CD4-positive, alpha-beta memory T cell (primary cell): ENCODE measurements at regions of chr17 and their contacts with region 1.

Region 1: GRCh38 chr17:40531051-40531991 is 29.9 kb upstream of the TNS4 start:
- DNase-seq: peak; percentile 53 to 85 (median 58)
- H3K4me3 ChIP-seq: no peak overlapping the region
- H3K4me3 Mint-ChIP-seq: peak overlapping the region in 7 of 8 donors; percentile 27 to 75 (median 37)
- H3K27ac ChIP-seq: no peak overlapping the region
- H3K27ac Mint-ChIP-seq: peak overlapping the region; percentile 78 to 100 (median 84)
- H3K4me1 ChIP-seq: peaks cover 77% of the 10 kb centered on the region
- H3K4me1 Mint-ChIP-seq: peaks cover 57 to 82% (median 65%) of the 10 kb centered on the region in 4 donors
- H3K27me3 ChIP-seq: no peaks in the 10 kb centered on the region
- H3K27me3 Mint-ChIP-seq: peaks cover 0 to 2% of the 10 kb centered on the region in 2 donors

Region 2: GRCh38 chr17:40303009-40303657 is 228.2 kb before region 1 on chr17:
- CTCF ChIA-PET with region 1: interaction called, 27 read pairs
- POLR2A ChIA-PET with region 1: interaction called, 6 read pairs
- intact Hi-C with region 1: loop called (anchors 5 kb)
- DNase-seq: peak; percentile 62 to 70 (median 66)
- H3K4me3 ChIP-seq: no peak overlapping the region
- H3K4me3 Mint-ChIP-seq: no peak overlapping the region
- H3K27ac ChIP-seq: no peak overlapping the region
- H3K27ac Mint-ChIP-seq: peak overlapping the region in 5 of 7 donors; percentile 2 to 53 (median 13)
- H3K4me1 ChIP-seq: peaks cover 37% of the 10 kb centered on the region
- H3K4me1 Mint-ChIP-seq: peaks cover 14 to 17% (median 15%) of the 10 kb centered on the region in 4 donors
- H3K27me3 ChIP-seq: no peaks in the 10 kb centered on the region
- H3K27me3 Mint-ChIP-seq: no peaks in the 10 kb centered on the region

Region 3: GRCh38 chr17:40399185-40399584 is 132.1 kb before region 1 on chr17:
- CTCF ChIA-PET with region 1: interaction called, 93 read pairs
- POLR2A ChIA-PET with region 1: interaction called, 24 read pairs
- intact Hi-C with region 1: loop called (anchors 1 kb)
- DNase-seq: peak in 4 of 5 donors; percentile 40 to 66 (median 57)
- H3K4me3 ChIP-seq: no peak overlapping the region
- H3K4me3 Mint-ChIP-seq: no peak overlapping the region
- H3K27ac ChIP-seq: no peak overlapping the region
- H3K27ac Mint-ChIP-seq: peak overlapping the region in 2 of 7 donors; percentile 82 to 84
- H3K4me1 ChIP-seq: peaks cover 21% of the 10 kb centered on the region
- H3K4me1 Mint-ChIP-seq: peaks cover 16 to 24% (median 21%) of the 10 kb centered on the region in 4 donors
- H3K27me3 ChIP-seq: no peaks in the 10 kb centered on the region
- H3K27me3 Mint-ChIP-seq: no peaks in the 10 kb centered on the region

Region 4: DNA sequence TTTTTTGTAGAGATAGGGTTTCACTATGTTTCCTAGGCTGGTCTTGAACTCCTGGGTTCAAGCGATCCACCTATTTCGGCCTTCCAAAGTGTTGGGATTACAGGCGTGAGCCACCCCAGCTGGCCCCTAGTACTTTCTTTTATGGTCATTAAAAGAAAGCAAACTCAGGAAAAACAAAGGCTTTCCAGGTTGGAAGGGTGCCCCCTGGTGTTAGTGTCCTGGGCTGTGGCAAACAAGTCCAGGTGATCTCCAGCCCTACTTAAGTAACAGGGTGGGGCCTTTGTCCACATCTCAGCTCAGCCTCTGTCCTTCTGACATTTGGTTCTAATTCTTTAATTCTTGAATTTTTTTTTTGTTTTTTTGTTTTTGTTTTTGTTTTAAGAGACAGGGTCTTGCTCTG is 81.1 kb before region 1 on chr17:
- CTCF ChIA-PET with region 1: interaction called, 192 read pairs
- POLR2A ChIA-PET with region 1: interaction called, 12 read pairs
- intact Hi-C with region 1: no loop called
- DNase-seq: peak in 2 of 5 donors; percentile 18 to 26
- H3K4me3 ChIP-seq: no peak overlapping the region
- H3K4me3 Mint-ChIP-seq: no peak overlapping the region
- H3K27ac ChIP-seq: no peak overlapping the region
- H3K27ac Mint-ChIP-seq: no peak overlapping the region
- H3K4me1 ChIP-seq: peaks cover 35% of the 10 kb centered on the region
- H3K4me1 Mint-ChIP-seq: peaks cover 12 to 30% (median 21%) of the 10 kb centered on the region in 4 donors
- H3K27me3 ChIP-seq: no peaks in the 10 kb centered on the region
- H3K27me3 Mint-ChIP-seq: no peaks in the 10 kb centered on the region

Region 5: DNA sequence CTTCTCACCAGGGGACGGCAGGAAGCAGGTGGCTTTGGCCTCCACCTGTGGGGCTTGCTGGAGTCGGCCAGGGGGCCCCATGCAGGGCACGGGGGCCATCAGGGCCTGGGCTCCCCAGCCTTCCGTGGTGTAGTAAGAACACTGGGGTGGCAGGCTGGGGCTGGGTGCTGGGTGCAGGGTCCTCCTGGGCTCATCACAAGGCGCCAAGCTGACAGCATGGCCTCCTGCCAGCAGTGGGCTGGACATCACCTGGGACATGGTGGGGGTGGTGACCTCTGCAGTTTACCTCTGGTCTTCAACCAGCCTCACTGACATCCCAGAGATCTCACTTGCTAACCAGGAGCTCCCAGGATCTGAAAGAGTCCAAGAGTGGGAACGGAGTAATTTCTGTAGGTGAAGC is 35.2 kb before region 1 on chr17:
- CTCF ChIA-PET with region 1: interaction called, 14 read pairs
- POLR2A ChIA-PET with region 1: interaction called, 29 read pairs
- intact Hi-C with region 1: no loop called
- DNase-seq: no peak
- H3K4me3 ChIP-seq: no peak overlapping the region
- H3K4me3 Mint-ChIP-seq: no peak overlapping the region
- H3K27ac ChIP-seq: no peak overlapping the region
- H3K27ac Mint-ChIP-seq: no peak overlapping the region
- H3K4me1 ChIP-seq: peaks cover 10% of the 10 kb centered on the region
- H3K4me1 Mint-ChIP-seq: peaks cover under 1 to 8% (median 6%) of the 10 kb centered on the region in 4 donors
- H3K27me3 ChIP-seq: no peaks in the 10 kb centered on the region
- H3K27me3 Mint-ChIP-seq: no peaks in the 10 kb centered on the region

Region 6: DNA sequence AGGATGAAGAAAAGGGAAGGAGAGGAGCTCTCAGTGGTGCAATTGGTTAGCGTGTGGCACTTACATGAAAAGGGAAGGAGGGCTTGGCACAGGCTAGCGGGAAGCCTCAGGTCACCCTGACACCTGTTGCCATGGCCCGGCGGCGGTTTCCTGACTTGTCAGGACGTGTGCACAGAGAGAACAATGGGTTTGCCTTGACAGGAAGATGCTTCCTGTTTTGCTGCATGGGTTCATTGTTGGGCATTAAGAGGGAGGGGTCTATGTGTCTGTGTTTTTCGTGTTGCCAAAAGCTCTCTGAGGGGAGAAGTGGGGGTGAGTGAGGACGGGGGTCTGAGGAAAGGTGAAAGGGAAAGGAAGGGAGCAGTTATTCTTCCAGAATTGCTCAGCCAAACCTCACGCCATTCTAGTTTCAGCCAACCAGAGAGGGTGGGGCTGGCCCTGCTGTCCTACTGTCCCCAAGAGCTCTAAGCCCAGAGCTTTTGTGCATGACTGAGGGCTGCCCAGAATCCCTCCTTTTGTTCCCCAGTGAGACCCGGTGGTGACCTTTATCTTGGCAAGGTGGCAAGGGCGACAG is 51.1 kb after region 1 on chr17:
- CTCF ChIA-PET with region 1: interaction called, 3 read pairs
- POLR2A ChIA-PET with region 1: interaction called, 10 read pairs
- intact Hi-C with region 1: no loop called
- DNase-seq: peak; percentile 74 to 78 (median 76)
- H3K4me3 ChIP-seq: peak overlapping the region; percentile 28 to 34
- H3K4me3 Mint-ChIP-seq: peak overlapping the region; percentile 32 to 84 (median 80)
- H3K27ac ChIP-seq: peak overlapping the region; percentile 47
- H3K27ac Mint-ChIP-seq: peak overlapping the region; percentile 75 to 96 (median 95)
- H3K4me1 ChIP-seq: peaks cover 72% of the 10 kb centered on the region
- H3K4me1 Mint-ChIP-seq: peaks cover 57 to 95% (median 78%) of the 10 kb centered on the region in 4 donors
- H3K27me3 ChIP-seq: no peaks in the 10 kb centered on the region
- H3K27me3 Mint-ChIP-seq: no peaks in the 10 kb centered on the region

Region 7: GRCh38 chr17:41026715-41027471 is 495.6 kb after region 1 on chr17 and contains the start of gene KRTAP1-5:
- CTCF ChIA-PET with region 1: no interaction called
- POLR2A ChIA-PET with region 1: no interaction called
- intact Hi-C with region 1: no loop called
- DNase-seq: no peak
- H3K4me3 ChIP-seq: no peak within 1 kb of the TSS
- H3K4me3 Mint-ChIP-seq: no peak within 1 kb of the TSS
- H3K27ac ChIP-seq: no peak within 1 kb of the TSS
- H3K27ac Mint-ChIP-seq: no peak within 1 kb of the TSS
- H3K4me1 ChIP-seq: no peaks in the 10 kb centered on the region
- H3K4me1 Mint-ChIP-seq: no peaks in the 10 kb centered on the region
- H3K27me3 ChIP-seq: no peaks in the 10 kb centered on the region
- H3K27me3 Mint-ChIP-seq: peaks cover 17 to 25% of the 10 kb centered on the region in 2 donors
- total RNA-seq, gene KRTAP1-5: not detected